ENCODE measurements at regions of chr6 and their contacts with region 1.

Region 1: DNA sequence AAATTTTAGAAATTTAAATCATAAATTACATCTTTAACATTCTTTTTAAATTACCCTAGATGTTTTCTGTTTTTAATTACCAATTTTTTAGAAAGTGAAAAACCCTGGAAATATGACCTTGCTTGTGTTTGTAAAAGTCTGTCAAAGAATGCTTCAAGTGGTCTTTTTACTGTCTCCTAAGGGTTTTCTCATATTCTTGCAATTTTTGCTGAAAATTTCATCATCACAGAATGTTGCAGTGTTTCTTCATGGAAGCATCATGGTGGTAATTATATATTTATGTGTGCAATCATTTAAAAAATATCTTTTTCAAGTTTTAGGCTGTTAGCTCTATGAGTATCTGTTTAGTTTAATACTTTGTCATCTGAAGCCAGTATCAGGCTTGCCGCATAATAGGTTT is 178.2 kb downstream of the HDGFL1 start:
- DNase-seq: no peak
- H3K4me3 ChIP-seq: no peak overlapping the region
- H3K4me3 Mint-ChIP-seq: no peak overlapping the region
- H3K27ac Mint-ChIP-seq: no peak overlapping the region
- H3K4me1 ChIP-seq: peaks cover 15% of the 10 kb centered on the region
- H3K4me1 Mint-ChIP-seq: peaks cover 18% of the 10 kb centered on the region
- H3K27me3 ChIP-seq: no peaks in the 10 kb centered on the region
- H3K27me3 Mint-ChIP-seq: no peaks in the 10 kb centered on the region
- CTCF ChIP-seq: no peak

Region 2: DNA sequence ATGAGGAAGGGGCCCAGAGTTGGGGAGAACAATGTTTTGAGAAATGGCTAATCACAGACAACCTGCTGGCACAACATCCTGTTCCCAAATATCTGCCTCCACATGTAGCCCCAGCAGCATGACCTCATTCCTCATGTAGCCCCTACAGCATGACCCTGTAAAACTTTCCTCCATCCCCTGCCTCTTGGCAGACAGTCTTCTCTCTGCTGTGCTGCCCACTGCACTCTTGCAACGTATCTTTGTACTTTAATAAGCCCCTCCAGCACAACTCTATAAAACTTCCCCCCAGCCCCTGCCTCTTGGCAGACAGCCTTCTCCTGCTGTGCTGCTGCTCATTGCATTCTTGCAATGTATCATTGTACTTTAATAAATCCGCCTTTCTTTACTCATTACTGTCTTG is 100.5 kb after region 1 on chr6:
- CTCF ChIA-PET with region 1: no interaction called
- POLR2A ChIA-PET with region 1: no interaction called
- intact Hi-C with region 1: no loop called
- DNase-seq: no peak
- H3K4me3 ChIP-seq: no peak overlapping the region
- H3K4me3 Mint-ChIP-seq: no peak overlapping the region
- H3K27ac Mint-ChIP-seq: no peak overlapping the region
- H3K4me1 ChIP-seq: peaks cover 9% of the 10 kb centered on the region
- H3K4me1 Mint-ChIP-seq: peaks cover 13% of the 10 kb centered on the region
- H3K27me3 ChIP-seq: no peaks in the 10 kb centered on the region
- H3K27me3 Mint-ChIP-seq: no peaks in the 10 kb centered on the region
- CTCF ChIP-seq: no peak

Region 3: GRCh38 chr6:22880686-22881433 is 133.3 kb after region 1 on chr6:
- CTCF ChIA-PET with region 1: no interaction called
- POLR2A ChIA-PET with region 1: no interaction called
- intact Hi-C with region 1: loop called (anchors 2 kb)
- DNase-seq: peak; percentile 49 to 68
- H3K4me3 ChIP-seq: no peak overlapping the region
- H3K4me3 Mint-ChIP-seq: peak overlapping the region; percentile 67
- H3K27ac Mint-ChIP-seq: peak overlapping the region; percentile 77
- H3K4me1 ChIP-seq: peaks cover 59% of the 10 kb centered on the region
- H3K4me1 Mint-ChIP-seq: peaks cover 46% of the 10 kb centered on the region
- H3K27me3 ChIP-seq: no peaks in the 10 kb centered on the region
- H3K27me3 Mint-ChIP-seq: no peaks in the 10 kb centered on the region
- CTCF ChIP-seq: no peak

Region 4: DNA sequence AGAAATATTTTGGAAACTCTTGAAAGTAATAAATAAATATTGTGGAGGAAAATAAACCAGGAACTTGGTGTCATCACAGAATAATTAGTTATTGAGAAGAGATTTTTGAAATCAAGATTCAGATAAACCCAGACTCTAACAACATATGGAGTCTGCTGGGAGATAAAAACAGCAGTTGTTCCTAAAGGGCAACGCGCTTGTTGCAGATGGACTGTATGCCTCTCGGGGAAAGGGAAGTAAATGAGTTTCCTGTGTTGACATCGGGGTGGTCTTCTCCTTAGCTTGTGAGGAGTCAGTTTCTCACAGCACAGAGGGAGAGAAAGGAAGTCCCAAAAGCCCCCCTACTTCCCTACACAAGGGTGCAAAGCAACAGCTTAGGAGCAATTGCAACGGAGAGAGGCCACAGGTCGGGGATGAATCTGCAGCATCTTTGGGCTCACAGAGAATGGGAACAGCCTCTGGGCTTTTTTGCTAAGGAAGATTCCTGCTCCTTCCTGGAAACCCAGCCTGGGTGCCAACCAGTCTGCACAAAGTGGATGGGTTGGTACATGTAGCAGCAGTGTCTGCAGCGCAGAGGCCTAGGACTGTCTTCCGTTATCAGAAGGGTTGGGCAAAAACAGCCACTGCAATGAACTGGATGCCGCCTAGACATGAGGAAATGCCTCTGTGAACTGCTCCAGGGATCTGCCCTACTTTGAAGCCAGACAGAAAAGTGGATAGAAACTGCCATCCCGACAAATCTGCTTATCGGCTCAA is 775.4 kb after region 1 on chr6:
- CTCF ChIA-PET with region 1: no interaction called
- POLR2A ChIA-PET with region 1: no interaction called
- intact Hi-C with region 1: no loop called
- DNase-seq: no peak
- H3K4me3 ChIP-seq: no peak overlapping the region
- H3K4me3 Mint-ChIP-seq: no peak overlapping the region
- H3K27ac Mint-ChIP-seq: no peak overlapping the region
- H3K4me1 ChIP-seq: no peaks in the 10 kb centered on the region
- H3K4me1 Mint-ChIP-seq: no peaks in the 10 kb centered on the region
- H3K27me3 ChIP-seq: no peaks in the 10 kb centered on the region
- H3K27me3 Mint-ChIP-seq: no peaks in the 10 kb centered on the region
- CTCF ChIP-seq: no peak

Measured in Caco-2 (cell line).